ENCODE measurements at regions of chr13 and their contacts with region 1.

Region 1: GRCh38 chr13:112616586-112617362 is 28.8 kb upstream of the TUBGCP3 start:
- DNase-seq: peak; percentile 35
- ATAC-seq: peak; percentile 85
- H3K4me3 ChIP-seq: no peak overlapping the region
- H3K27ac ChIP-seq: no peak overlapping the region
- H3K4me1 ChIP-seq: peaks cover 11% of the 10 kb centered on the region
- H3K27me3 ChIP-seq: peaks cover 7 to 62% of the 10 kb centered on the region in 2 experiments
- CTCF ChIP-seq: peak; percentile 75
- EP300 ChIP-seq: no peak
- POLR2A ChIP-seq: no peak
- RAD21 ChIP-seq: no peak

Region 2: GRCh38 chr13:111976474-111977178 is 640.1 kb before region 1 on chr13:
- CTCF ChIA-PET with region 1: no interaction called
- POLR2A ChIA-PET with region 1: no interaction called
- in situ Hi-C with region 1: no loop called
- intact Hi-C with region 1: loop called (anchors 5 kb)
- DNase-seq: no peak
- ATAC-seq: no peak
- H3K4me3 ChIP-seq: no peak overlapping the region
- H3K27ac ChIP-seq: no peak overlapping the region
- H3K4me1 ChIP-seq: no peaks in the 10 kb centered on the region
- H3K27me3 ChIP-seq: peaks cover 0 to 39% of the 10 kb centered on the region in 2 experiments
- CTCF ChIP-seq: no peak
- EP300 ChIP-seq: no peak
- POLR2A ChIP-seq: no peak
- RAD21 ChIP-seq: no peak

Region 3: GRCh38 chr13:112873851-112874750 is 257.3 kb after region 1 on chr13:
- CTCF ChIA-PET with region 1: no interaction called
- POLR2A ChIA-PET with region 1: no interaction called
- in situ Hi-C with region 1: no loop called
- intact Hi-C with region 1: loop called (anchors 1 kb)
- DNase-seq: peak; percentile 67
- ATAC-seq: peak; percentile 93
- H3K4me3 ChIP-seq: no peak overlapping the region
- H3K27ac ChIP-seq: no peak overlapping the region
- H3K4me1 ChIP-seq: peaks cover 6% of the 10 kb centered on the region; the same call in 1 of the 2 replicates
- H3K27me3 ChIP-seq: no peaks in the 10 kb centered on the region
- CTCF ChIP-seq: peak; percentile 91
- EP300 ChIP-seq: no peak
- POLR2A ChIP-seq: no peak
- RAD21 ChIP-seq: peak; percentile 80

Measured in HepG2 (cell line).